ENCODE measurements at regions of chr11 and their contacts with region 1.

Region 1: DNA sequence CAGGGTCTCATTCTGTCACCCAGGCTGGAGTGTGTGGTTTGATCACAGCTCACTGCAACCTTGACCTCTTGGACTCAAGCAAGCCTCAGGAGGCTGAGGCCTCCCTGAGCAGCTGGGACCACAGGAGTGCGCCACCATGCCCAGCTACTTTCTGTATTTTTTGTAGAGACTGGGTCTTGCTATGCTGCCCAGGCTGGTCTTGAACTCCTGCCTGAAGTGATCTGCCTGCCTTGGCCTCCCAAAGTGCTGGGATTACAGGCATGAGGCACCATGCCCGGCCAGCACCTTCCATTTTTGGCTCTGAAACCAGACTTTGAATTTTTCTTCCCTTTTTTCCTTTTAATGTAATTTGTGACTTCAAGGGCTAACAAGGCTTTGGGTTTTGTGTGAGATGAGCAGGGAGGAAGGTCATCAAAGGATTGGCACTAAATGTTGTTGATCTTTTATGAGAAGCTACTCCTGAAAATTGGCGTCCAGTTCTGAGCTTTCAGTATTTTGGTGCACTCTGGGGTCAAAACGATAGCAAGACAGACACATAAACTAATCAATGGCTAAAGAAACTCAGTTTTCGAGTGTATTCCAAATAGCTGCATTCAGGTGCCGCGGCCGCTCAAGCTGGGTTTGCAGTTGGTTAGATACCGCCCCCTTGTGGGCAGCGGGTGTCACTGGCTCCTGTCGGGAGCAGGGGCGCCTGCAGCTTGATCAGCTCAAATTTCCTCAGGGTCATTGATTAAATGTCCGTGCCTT is 51.9 kb upstream of the CLMP start:
- DNase-seq: peak; percentile 54 to 80
- H3K4me3 ChIP-seq: no peak overlapping the region
- H3K27ac ChIP-seq: no peak overlapping the region
- H3K4me1 ChIP-seq: peaks cover 16% of the 10 kb centered on the region
- H3K27me3 ChIP-seq: no peaks in the 10 kb centered on the region
- CTCF ChIP-seq: peak; percentile 94

Region 2: GRCh38 chr11:122863704-122864326 is 383.1 kb before region 1 on chr11:
- CTCF ChIA-PET with region 1: no interaction called
- POLR2A ChIA-PET with region 1: no interaction called
- intact Hi-C with region 1: loop called (anchors 5 kb)
- DNase-seq: peak in 1 of 2 experiments; percentile 37
- H3K4me3 ChIP-seq: no peak overlapping the region
- H3K27ac ChIP-seq: 0 out of 2 replicates have a peak overlapping the region, but pooled peaks have one; percentile 5
- H3K4me1 ChIP-seq: peaks cover 35% of the 10 kb centered on the region
- H3K27me3 ChIP-seq: no peaks in the 10 kb centered on the region
- CTCF ChIP-seq: peak; percentile 93

Region 3: GRCh38 chr11:123261345-123262106 is 14.6 kb after region 1 on chr11:
- CTCF ChIA-PET with region 1: interaction called, 19 read pairs
- POLR2A ChIA-PET with region 1: interaction called, 10 read pairs
- intact Hi-C with region 1: no loop called
- DNase-seq: peak; percentile 78 to 86
- H3K4me3 ChIP-seq: peak overlapping the region; percentile 32; the same call in 1 of the 2 replicates
- H3K27ac ChIP-seq: no peak overlapping the region
- H3K4me1 ChIP-seq: peaks cover 15% of the 10 kb centered on the region
- H3K27me3 ChIP-seq: no peaks in the 10 kb centered on the region
- CTCF ChIP-seq: peak; percentile 90

Measured in PC-9 (cell line).